ENCODE measurements at regions of chr15 and their contacts with region 1.

Region 1: DNA sequence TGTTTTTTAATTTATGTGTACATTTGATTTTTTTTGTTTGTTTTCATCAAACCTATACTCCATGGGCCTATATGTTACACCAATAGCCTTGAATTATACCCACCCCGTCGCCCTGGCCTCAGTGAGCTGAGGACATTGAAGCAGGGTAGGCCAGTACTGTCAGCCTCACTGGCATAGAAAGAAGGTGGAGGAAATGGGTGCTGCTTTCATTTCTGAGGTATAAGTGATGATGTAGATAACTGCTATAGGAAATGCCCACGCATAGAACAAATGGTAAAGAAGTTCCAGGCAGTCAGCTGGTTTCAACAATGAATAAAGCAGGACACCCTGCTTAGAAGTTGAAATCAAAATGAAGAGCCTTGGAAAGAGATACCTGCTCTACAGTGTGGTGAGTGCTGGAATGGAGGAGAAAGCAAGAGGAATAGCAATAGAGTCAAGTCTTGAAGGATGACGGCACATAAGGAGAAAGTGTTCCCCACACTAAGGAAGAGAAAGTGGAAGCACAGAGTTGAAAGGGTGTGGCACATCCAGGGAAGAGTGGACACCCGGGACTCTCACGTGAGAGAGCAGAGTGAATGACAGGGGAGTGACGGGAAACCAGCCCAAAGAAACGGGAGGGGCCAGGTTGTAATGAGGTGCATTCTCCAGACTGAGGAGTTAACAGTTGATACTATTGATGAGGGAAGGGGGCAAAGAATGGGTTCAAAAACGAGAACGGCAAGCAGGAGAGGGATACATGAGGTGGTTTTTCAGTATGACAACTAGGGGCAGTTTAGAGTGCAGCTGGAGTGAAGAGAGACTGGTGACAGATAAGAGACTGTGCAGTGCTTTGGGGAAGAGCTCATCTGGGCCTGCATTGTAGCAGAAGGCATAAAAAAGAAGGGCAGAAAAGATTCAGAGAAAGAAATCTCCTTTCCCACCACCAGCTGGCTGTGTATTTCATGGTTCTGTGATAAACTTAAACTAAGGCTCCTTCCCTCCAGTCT is 70.5 kb downstream of the KLHL25 start:
- DNase-seq: peak in 3 of 9 donors; percentile 18 to 26 (median 23)
- ATAC-seq: peak; percentile 89
- H3K4me3 ChIP-seq: no peak overlapping the region
- H3K4me3 Mint-ChIP-seq: peak overlapping the region in 8 of 10 donors; percentile 3 to 66 (median 44)
- H3K27ac ChIP-seq: peak overlapping the region; percentile 34
- H3K27ac Mint-ChIP-seq: peak overlapping the region; percentile 85 to 99 (median 92)
- H3K4me1 ChIP-seq: peaks cover 8 to 18% of the 10 kb centered on the region in 2 donors
- H3K4me1 Mint-ChIP-seq: peaks cover 20 to 43% (median 35%) of the 10 kb centered on the region in 7 donors
- H3K27me3 ChIP-seq: no peaks in the 10 kb centered on the region
- H3K27me3 Mint-ChIP-seq: no peaks in the 10 kb centered on the region

Region 2: DNA sequence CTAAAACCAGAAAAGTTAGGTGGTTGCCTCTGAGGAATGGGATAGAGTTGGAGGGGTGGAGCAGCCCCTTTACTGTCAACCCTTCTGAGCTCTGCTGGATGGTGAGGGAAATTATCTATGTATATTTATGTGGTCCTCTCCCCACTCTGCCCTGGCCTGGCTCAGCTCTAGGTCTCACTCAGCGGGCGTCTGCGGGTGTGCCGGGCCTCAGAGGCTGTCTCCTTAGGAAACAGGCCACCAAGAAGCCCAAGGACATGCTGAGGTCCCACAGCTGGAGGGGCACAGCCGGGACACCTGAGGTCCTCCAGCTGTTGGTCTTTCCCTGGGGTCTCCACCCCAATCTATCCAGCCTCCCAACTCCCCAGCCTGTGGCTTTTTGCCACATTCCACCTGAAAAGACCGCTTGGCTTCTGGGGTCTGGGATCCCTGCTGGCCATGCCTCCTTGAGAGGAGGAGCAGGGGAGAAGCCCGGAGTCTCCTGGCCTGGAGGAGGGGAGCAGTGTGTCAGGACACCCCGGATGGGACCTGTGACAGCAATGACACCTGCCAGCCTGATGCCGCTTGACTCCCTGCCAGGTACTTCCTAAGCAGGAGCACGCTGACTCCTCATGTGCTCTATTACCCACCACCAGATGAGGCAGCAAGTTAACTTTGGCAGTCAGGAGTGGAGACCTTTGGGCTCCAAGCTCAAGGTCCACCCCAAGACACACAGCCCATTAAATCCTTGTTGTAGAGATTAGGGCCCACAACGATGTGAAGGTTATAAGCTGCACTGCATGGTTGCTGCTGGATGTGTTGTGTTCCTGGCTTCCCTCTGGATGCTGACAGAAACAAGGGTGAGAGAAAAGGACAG is 840.1 kb before region 1 on chr15 and contains the start of gene SLC28A1:
- CTCF ChIA-PET with region 1: no interaction called
- POLR2A ChIA-PET with region 1: no interaction called
- intact Hi-C with region 1: no loop called
- DNase-seq: no peak
- ATAC-seq: no peak
- H3K4me3 ChIP-seq: no peak within 1 kb of the TSS
- H3K4me3 Mint-ChIP-seq: no peak within 1 kb of the TSS
- H3K27ac ChIP-seq: no peak within 1 kb of the TSS
- H3K27ac Mint-ChIP-seq: no peak within 1 kb of the TSS
- H3K4me1 ChIP-seq: no peaks in the 10 kb centered on the region
- H3K4me1 Mint-ChIP-seq: no peaks in the 10 kb centered on the region
- H3K27me3 ChIP-seq: no peaks in the 10 kb centered on the region
- H3K27me3 Mint-ChIP-seq: peaks cover 0 to 10% (median 0%) of the 10 kb centered on the region in 5 donors
- total RNA-seq, gene SLC28A1: not detected

Region 3: DNA sequence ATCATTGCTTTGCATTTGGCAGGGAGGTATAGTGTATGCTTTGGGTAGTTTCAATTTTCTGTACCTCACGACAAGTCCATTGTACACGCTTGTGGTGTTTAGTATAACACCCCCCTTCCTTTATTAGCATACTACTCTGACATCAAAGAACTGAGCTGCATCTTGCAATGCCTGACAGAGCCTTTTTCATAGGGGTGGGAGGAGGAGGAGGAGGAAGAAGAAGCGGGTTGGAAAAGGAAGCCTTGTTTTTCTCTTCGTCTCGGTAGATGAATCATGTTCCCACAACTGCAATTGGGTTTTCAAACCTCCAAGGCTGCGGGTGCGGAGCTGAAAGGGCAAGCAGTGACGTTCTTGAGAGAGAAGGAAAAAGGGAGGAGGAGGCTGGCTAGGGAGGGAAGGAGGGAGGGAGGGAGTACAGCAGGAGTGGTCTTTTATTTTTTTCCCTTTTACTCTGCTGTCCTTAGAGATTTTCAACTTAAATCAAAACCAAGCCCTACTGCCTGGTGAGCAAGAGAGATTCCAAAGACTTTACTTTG is 105.2 kb before region 1 on chr15:
- CTCF ChIA-PET with region 1: no interaction called
- POLR2A ChIA-PET with region 1: no interaction called
- intact Hi-C with region 1: loop called in 1 of 2 experiments (anchors 5 kb)
- DNase-seq: peak in 6 of 9 donors; percentile 13 to 68 (median 24)
- ATAC-seq: peak; percentile 77
- H3K4me3 ChIP-seq: peak overlapping the region; percentile 3
- H3K4me3 Mint-ChIP-seq: no peak overlapping the region
- H3K27ac ChIP-seq: peak overlapping the region; percentile 6
- H3K27ac Mint-ChIP-seq: no peak overlapping the region
- H3K4me1 ChIP-seq: peaks cover 29 to 38% of the 10 kb centered on the region in 2 donors
- H3K4me1 Mint-ChIP-seq: peaks cover 14 to 41% (median 26%) of the 10 kb centered on the region in 7 donors
- H3K27me3 ChIP-seq: no peaks in the 10 kb centered on the region
- H3K27me3 Mint-ChIP-seq: no peaks in the 10 kb centered on the region

Measured in naive thymus-derived CD4-positive, alpha-beta T cell (primary cell).